T-cell (primary cell): ENCODE measurements at regions of chr5 and their contacts with region 1.

Region 1: DNA sequence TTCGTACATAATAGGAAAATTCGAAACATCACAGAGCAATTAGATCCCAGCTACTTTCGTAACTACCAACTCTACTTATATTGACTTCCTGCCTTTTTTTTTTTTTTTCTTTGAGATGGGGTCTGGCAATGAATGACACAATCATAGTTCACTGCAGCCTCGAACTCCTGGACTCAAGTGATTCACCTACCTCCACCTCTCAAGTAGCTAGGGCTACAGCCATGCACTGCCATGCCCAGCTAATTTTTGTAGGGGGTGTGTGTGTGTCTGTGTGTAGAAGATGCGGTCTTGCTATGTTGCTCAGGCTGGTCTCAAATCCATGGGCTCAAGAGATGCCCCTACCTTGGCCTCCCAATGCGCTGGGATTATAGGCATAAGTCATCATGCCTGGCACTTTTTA is 5.8 kb upstream of the PAIP2 start:
- DNase-seq: peak in 2 of 35 experiments; percentile 24 to 27
- ATAC-seq: peak in 3 of 4 experiments; percentile 23 to 40 (median 29)
- H3K4me3 ChIP-seq: no peak overlapping the region
- H3K4me3 Mint-ChIP-seq: no peak overlapping the region
- H3K27ac ChIP-seq: no peak overlapping the region
- H3K27ac Mint-ChIP-seq: peak overlapping the region in 1 of 2 donors; percentile 71
- H3K4me1 ChIP-seq: peaks cover under 1 to 3% of the 10 kb centered on the region in 2 experiments
- H3K4me1 Mint-ChIP-seq: peaks cover 12 to 24% (median 15%) of the 10 kb centered on the region in 3 donors
- H3K27me3 ChIP-seq: no peaks in the 10 kb centered on the region
- H3K27me3 Mint-ChIP-seq: no peaks in the 10 kb centered on the region

Region 2: GRCh38 chr5:138492560-138493045 is 843.2 kb before region 1 on chr5:
- CTCF ChIA-PET with region 1: interaction called in 1 of 2 experiments, 10 read pairs
- POLR2A ChIA-PET with region 1: interaction called in 1 of 2 experiments, 4 read pairs
- DNase-seq: peak in 1 of 35 experiments; percentile 13
- ATAC-seq: no peak
- H3K4me3 ChIP-seq: peak overlapping the region; percentile 52 to 53
- H3K4me3 Mint-ChIP-seq: peak overlapping the region; percentile 85 to 86 (median 86)
- H3K27ac ChIP-seq: no peak overlapping the region
- H3K27ac Mint-ChIP-seq: no peak overlapping the region
- H3K4me1 ChIP-seq: peaks cover 6 to 22% of the 10 kb centered on the region in 2 experiments
- H3K4me1 Mint-ChIP-seq: peaks cover 9 to 19% (median 16%) of the 10 kb centered on the region in 3 donors
- H3K27me3 ChIP-seq: peaks cover 0 to 47% of the 10 kb centered on the region in 2 experiments
- H3K27me3 Mint-ChIP-seq: peaks cover 5 to 20% of the 10 kb centered on the region in 2 donors

Region 3: GRCh38 chr5:139312075-139312474 is 23.7 kb before region 1 on chr5:
- CTCF ChIA-PET with region 1: interaction called, 5 to 10 read pairs
- POLR2A ChIA-PET with region 1: interaction called in 1 of 2 experiments, 6 read pairs
- DNase-seq: no peak
- ATAC-seq: peak in 1 of 4 experiments; percentile 7
- H3K4me3 ChIP-seq: no peak overlapping the region
- H3K4me3 Mint-ChIP-seq: peak overlapping the region in 1 of 3 donors; percentile 25
- H3K27ac ChIP-seq: no peak overlapping the region
- H3K27ac Mint-ChIP-seq: no peak overlapping the region
- H3K4me1 ChIP-seq: peaks cover 17 to 25% of the 10 kb centered on the region in 2 experiments
- H3K4me1 Mint-ChIP-seq: peaks cover 66 to 78% (median 73%) of the 10 kb centered on the region in 3 donors
- H3K27me3 ChIP-seq: no peaks in the 10 kb centered on the region
- H3K27me3 Mint-ChIP-seq: no peaks in the 10 kb centered on the region

Region 4: DNA sequence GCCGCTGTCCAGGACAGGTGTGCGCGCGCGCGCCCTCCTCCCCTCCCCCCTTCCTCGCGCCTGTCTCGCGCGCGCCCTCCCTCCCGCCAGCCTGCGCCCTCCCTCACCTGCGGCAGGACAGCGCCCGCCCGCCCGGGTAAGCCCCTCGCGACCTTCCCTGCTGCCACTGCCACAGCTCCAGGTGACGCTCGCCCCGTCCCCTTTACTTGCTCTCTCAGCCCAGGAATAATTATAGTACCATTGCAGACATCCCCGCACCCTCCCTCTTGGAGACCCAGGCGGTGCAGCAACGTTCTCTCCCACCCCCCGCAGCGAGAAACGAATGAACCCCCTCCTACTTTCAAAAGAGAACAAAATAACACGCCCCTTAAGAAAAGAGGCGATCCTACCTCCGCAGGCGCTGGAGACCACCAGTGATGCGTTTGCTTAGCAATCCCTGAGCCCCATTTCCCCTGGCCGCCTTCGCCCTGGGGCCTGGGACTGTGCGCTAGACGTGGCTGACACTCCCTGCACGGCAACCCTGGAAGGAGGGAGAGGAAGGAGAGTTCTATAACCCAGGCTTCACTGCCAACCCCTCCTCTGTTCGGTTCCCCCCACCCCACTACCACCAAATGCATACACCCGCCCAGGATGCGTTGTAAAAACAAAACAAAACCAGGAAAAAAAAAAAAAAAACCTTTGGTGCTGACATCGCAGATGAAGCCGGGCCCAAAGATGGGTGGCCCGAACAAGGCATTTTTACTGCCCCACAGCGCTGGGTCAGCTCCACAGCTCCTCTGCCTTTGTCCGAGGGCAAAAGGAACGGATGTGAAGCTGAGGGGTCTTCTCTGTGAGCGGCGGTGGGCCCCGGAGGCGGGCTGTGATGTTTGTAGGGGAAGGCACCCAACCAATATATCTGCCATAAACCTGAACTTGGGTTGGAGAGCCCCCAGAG is 772.5 kb after region 1 on chr5:
- CTCF ChIA-PET with region 1: interaction called in 1 of 2 experiments, 11 read pairs
- POLR2A ChIA-PET with region 1: no interaction called
- DNase-seq: peak in 13 of 35 experiments; percentile 4 to 31 (median 20)
- ATAC-seq: peak in 1 of 4 experiments; percentile 0
- H3K4me3 ChIP-seq: peak overlapping the region; percentile 77 to 87
- H3K4me3 Mint-ChIP-seq: peak overlapping the region; percentile 91 to 96 (median 95)
- H3K27ac ChIP-seq: peak overlapping the region; percentile 97
- H3K27ac Mint-ChIP-seq: peak overlapping the region; percentile 95 to 98
- H3K4me1 ChIP-seq: peaks cover 17 to 42% of the 10 kb centered on the region in 2 experiments
- H3K4me1 Mint-ChIP-seq: peaks cover 51 to 59% (median 58%) of the 10 kb centered on the region in 3 donors
- H3K27me3 ChIP-seq: peaks cover 9 to 12% of the 10 kb centered on the region in 2 experiments
- H3K27me3 Mint-ChIP-seq: peaks cover 3 to 7% of the 10 kb centered on the region in 2 donors